ENCODE measurements at regions of chr3 and their contacts with region 1.

Region 1: GRCh38 chr3:57555738-57556458 is at the start of gene PDE12:
- H3K4me3 Mint-ChIP-seq: peak within 1 kb of the TSS; percentile 90
- H3K27ac Mint-ChIP-seq: peak within 1 kb of the TSS; percentile 96
- H3K4me1 Mint-ChIP-seq: peaks cover 33% of the 10 kb centered on the region
- H3K27me3 Mint-ChIP-seq: no peaks in the 10 kb centered on the region

Region 2: GRCh38 chr3:57169872-57170623 is 385.9 kb before region 1 on chr3:
- intact Hi-C with region 1: loop called (anchors 10 kb)
- H3K4me3 Mint-ChIP-seq: peak overlapping the region; percentile 59
- H3K27ac Mint-ChIP-seq: no peak overlapping the region
- H3K4me1 Mint-ChIP-seq: peaks cover 29% of the 10 kb centered on the region
- H3K27me3 Mint-ChIP-seq: peaks cover 46% of the 10 kb centered on the region

Region 3: GRCh38 chr3:57597122-57597923 is 41.4 kb after region 1 on chr3 and contains the start of gene ARF4:
- intact Hi-C with region 1: loop called (anchors 1 kb)
- H3K4me3 Mint-ChIP-seq: peak within 1 kb of the TSS; percentile 86
- H3K27ac Mint-ChIP-seq: peak within 1 kb of the TSS; percentile 92
- H3K4me1 Mint-ChIP-seq: peaks cover 38% of the 10 kb centered on the region
- H3K27me3 Mint-ChIP-seq: no peaks in the 10 kb centered on the region

Region 4: DNA sequence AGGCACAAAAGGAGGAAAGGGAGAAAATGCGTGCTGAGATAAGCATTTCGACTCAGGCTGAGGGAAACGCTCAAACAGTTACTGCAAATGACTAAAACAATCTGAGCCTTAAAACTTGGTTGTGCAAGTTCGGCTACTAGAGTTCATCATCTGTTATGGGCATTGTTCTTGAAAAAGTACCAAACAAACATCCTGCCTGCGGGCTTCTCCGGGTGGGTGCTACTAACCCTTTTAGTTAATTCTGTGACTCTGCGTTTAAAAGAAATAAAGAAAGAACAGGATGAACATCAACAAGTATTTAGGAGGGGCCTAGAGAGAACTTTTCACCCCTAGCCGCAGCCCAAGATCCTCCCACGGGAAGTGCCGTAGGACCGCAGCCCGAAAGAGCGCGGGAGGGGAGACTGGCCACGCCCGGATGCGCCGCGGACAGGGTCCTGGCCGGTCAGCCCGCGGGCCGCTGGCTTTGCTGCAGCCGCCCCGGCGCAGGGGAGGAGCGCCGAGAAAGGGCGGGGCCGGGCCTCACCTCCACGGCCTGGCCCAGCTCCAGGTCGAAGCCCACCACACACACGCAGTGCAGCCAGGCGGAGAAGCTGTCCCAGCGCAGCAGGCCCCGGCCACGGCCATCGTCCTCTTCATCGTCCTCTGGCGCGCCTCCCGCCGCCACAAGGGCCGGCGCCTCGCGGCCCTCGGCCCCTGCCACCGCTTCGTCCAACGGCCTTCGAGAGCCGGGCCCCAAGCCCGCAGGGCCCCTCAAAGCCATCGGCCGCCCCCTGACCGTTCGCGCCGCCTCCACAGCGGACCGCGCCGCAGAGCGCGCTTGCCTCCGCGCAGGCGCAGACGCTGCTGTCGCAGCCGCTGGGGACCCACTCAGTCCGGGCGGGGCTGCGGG is 136.6 kb after region 1 on chr3 and contains the start of gene DENND6A:
- intact Hi-C with region 1: loop called (anchors 5 kb)
- H3K4me3 Mint-ChIP-seq: peak within 1 kb of the TSS; percentile 79
- H3K27ac Mint-ChIP-seq: peak within 1 kb of the TSS; percentile 82
- H3K4me1 Mint-ChIP-seq: peaks cover 35% of the 10 kb centered on the region
- H3K27me3 Mint-ChIP-seq: no peaks in the 10 kb centered on the region

Region 5: GRCh38 chr3:57755668-57756527 is 200.0 kb after region 1 on chr3 and contains the start of gene SLMAP:
- intact Hi-C with region 1: loop called (anchors 2 kb)
- H3K4me3 Mint-ChIP-seq: peak within 1 kb of the TSS; percentile 95
- H3K27ac Mint-ChIP-seq: peak within 1 kb of the TSS; percentile 89
- H3K4me1 Mint-ChIP-seq: peaks cover 33% of the 10 kb centered on the region
- H3K27me3 Mint-ChIP-seq: no peaks in the 10 kb centered on the region

Measured in dendritic cell treated with granulocyte-macrophage colony-stimulating factor and Interleukin-4, amounts not matched to agents 40 ng/mL and 50 ng/mL, for 4 days (primary cell).